Cardiac septum (tissue), 1 donor: ENCODE measurements at regions of chr10 and their contacts with region 1.

Region 1: DNA sequence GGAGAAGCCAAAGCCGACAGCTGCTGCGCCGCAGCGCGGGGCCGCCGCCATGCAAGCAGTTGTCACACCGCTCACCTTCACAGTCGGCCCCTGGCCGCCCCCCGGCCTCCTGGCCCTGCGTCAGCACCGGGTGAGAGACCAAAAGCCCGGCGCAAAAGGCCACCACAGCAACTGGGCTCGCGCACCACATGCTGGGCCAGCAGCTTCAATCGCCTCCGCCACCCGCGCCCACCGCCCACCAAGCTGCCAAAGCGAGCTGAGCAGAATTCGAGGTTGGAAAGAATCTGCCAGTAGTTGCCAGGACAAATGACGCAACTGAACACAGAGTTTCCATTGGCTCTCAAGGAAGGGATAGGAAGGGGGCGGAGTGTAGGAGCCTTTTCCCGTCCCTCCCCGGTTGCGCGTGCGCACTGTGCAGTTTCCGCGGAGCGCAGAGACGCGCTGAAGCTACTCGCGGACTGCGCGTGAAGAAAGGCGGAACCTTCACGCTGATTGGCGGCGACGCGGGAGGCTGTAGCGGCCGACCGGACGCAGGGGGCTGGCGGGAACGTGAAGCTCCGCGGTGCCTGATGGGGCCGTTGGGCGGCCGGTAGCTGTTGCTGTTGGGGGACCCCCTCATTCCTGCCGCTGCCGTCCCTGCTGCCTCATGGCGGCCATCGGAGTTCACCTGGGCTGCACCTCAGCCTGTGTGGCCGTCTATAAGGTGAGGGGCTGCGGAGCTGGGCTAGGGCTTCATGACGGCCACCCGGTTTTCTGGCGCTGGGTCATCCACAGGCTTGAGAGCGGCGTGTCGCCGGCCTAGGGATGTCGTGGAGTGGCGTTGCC is at the starts of genes CDNF, HSPA14 and MSANTD7:
- DNase-seq: peak; percentile 100
- total RNA-seq, gene CDNF: 2.3 TPM
- total RNA-seq, gene HSPA14: 7.3 TPM
- total RNA-seq, gene MSANTD7: 6.0 TPM

Region 2: DNA sequence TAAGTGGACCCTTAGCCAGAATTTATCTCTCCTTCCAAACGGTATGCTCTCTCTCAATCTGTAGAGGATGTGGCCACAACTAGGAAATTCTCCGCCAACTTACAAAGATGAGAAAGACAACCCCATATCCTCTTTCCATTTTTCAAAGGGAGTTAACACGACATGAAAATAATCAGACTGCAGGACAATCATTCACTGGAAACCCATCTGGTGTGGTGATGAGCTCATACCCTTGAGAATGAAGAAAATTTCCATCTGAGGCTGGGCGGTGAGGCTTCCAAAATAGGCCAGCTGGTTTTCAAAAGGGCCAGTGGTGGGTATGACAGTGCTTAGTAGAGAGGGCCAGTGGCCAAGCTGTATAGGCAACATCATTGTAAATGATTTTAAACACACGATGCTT is 876.9 kb before region 1 on chr10:
- intact Hi-C with region 1: no loop called
- DNase-seq: no peak

Region 3: GRCh38 chr10:14604181-14605142 is 233.5 kb before region 1 on chr10:
- intact Hi-C with region 1: loop called (anchors 5 kb)
- DNase-seq: peak; percentile 93

Region 4: DNA sequence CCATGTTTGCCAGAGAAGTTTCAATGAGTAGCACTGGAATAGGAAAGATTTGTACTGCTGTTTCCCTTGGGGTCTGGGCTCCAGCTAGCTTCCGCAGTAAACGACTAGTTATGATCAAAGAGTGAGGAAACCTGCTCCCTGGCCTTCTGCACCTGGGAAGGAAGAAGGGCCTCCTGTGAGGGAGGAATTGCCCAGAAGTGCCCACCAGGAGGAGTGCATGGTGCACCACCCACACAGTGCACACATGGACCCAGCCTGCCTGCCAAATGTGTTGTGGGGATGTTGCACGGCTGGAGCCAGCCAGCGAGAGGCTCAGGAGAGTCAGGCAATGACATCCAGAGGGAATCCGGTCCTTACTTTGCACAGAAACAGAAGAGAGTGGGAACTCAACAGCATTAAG is 36.2 kb before region 1 on chr10:
- intact Hi-C with region 1: no loop called
- DNase-seq: no peak

Region 5: GRCh38 chr10:14878266-14879054 is 40.5 kb after region 1 on chr10 and contains the start of gene SUV39H2:
- intact Hi-C with region 1: loop called (anchors 2 kb)
- DNase-seq: peak; percentile 97
- total RNA-seq, gene SUV39H2: 7.9 TPM

Region 6: DNA sequence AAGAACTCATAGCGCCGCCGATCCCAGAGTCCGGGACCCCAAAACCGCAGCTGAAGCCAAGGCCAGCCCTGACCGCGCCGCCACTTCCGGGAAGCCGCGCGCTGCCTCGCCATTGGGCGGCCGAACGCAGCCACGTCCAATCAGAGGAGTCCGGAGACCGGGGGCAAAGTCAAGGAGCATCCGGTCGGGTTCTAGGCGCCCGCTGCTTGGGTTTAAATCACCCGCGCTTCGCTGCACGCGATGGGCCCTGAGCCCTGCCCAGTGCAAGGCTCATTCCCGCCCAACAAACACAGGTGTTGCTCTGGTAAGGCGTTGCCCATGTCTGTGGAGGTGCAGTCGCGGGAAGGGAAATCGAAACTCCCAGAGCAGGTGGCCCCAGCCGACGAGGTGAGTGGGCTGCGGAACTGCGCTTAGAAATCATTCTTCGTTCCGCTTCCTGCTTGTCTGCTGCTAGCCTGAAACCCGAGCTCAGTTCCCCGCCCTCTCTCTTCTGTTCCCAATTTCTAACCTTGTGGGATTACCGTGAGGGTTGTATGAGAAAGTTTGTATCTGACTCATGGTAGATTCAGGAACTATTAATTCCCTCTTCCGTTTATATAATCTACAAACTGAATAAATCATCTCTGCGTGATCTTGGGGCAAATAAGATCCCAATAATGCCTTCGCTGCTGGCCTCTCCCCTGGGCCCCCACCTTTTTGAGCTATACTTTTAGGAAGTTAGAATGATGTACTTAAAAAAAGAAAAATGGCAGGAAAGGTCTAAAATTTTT is 116.2 kb after region 1 on chr10 and contains the start of gene DCLRE1C:
- intact Hi-C with region 1: loop called (anchors 5 kb)
- DNase-seq: peak; percentile 96
- total RNA-seq, gene DCLRE1C: 3.2 TPM